Kidney (tissue), 22 donors: ENCODE measurements at regions of chr14 and their contacts with region 1.

Region 1: GRCh38 chr14:61025251-61026223 is 44.5 kb downstream of the SLC38A6 start:
- DNase-seq: peak; percentile 39 to 82 (median 67)
- H3K4me3 ChIP-seq: no peak overlapping the region
- H3K27ac ChIP-seq: no peak overlapping the region
- H3K4me1 ChIP-seq: no peaks in the 10 kb centered on the region
- H3K27me3 ChIP-seq: no peaks in the 10 kb centered on the region
- CTCF ChIP-seq: peak; percentile 89

Region 2: DNA sequence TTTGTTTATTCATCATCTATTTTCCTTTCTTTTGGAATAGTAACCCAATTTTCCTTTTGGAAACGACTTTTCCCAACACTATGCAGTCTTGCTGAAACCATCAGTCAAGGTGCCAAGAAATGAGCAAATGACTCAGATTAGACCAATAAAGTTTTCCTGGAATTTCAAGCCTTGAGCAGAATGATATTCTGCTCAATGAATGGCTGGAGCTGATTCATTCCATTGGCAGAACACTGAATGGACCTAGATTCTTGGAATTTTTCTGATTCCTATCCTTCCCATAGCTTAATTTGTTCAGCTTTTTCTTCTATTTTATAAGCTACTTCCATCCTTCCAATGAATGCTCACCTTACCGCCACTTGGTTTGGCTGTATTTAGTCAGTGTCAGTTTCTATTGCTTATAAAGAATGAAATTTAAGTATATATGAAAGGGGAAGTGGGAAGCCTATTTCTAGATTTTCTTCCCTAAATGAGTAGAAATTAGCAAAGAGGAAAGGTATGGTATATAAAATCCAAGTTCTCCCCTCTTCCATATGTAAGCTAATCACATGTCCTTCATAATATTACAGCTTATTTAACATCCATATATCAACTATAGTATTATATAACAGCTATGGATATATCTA is 628.7 kb before region 1 on chr14:
- intact Hi-C with region 1: no loop called
- DNase-seq: no peak
- H3K4me3 ChIP-seq: no peak overlapping the region
- H3K27ac ChIP-seq: no peak overlapping the region
- H3K4me1 ChIP-seq: no peaks in the 10 kb centered on the region
- H3K27me3 ChIP-seq: no peaks in the 10 kb centered on the region
- CTCF ChIP-seq: no peak

Region 3: GRCh38 chr14:60622917-60623257 is 402.6 kb before region 1 on chr14:
- intact Hi-C with region 1: loop called (anchors 10 kb)
- DNase-seq: no peak
- H3K4me3 ChIP-seq: no peak overlapping the region
- H3K27ac ChIP-seq: no peak overlapping the region
- H3K4me1 ChIP-seq: peaks cover 0 to 4% (median 0%) of the 10 kb centered on the region in 3 donors
- H3K27me3 ChIP-seq: no peaks in the 10 kb centered on the region
- CTCF ChIP-seq: no peak